H1 (cell line): ENCODE measurements at regions of chr2 and their contacts with region 1.

Region 1: GRCh38 chr2:47119001-47119400 is 36.1 kb downstream of the STPG4 start:
- DNase-seq: no peak
- H3K4me3 ChIP-seq: no peak overlapping the region
- H3K27ac ChIP-seq: no peak overlapping the region
- H3K4me1 ChIP-seq: no peaks in the 10 kb centered on the region
- H3K27me3 ChIP-seq: no peaks in the 10 kb centered on the region
- CTCF ChIP-seq: no peak
- EP300 ChIP-seq: no peak
- POLR2A ChIP-seq: no peak
- RAD21 ChIP-seq: no peak

Region 2: DNA sequence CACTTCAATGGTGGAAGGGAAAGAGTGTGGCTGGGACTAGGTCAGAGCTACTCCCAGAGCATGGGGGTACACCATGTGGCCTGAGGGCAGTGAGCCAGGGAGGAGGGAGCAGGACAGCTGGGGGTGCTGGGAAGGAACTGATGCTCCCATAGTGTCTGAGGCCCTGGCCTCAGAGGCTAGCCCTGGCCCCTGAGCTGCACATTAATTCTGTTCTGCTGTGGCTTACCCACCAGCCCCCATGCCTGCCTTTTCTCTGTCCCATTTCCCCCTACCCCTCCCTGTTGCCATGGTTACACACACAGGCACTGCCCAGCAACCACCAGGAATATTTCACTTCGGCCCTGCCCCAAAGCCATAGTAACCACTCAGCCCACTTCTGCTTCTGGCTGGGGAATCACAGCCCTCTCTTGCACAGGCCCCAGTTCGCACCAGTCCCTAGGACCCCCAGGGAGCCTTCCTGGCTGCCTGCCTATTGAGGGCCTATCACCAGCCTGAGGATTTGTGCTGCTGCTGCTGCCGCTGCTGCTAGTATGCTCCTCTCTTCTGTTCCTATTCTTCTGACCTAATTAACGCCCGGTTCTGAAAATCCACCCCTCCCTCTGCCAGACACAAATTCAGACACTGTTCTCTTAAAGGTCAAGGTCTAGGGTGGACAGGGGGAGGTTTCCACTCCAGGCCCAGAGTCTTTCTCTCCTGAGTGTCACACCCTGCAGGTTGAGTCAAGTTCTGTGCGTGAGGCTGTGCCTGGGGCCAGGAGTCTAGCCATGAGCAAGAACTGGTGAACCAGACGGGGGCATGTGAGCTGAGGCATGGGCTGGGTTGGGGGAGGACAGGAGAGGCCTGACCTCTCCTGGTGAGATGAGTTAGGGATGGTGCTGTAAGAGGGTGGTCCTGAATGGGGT is 116.3 kb before region 1 on chr2:
- CTCF ChIA-PET with region 1: interaction called, 10 read pairs
- POLR2A ChIA-PET with region 1: no interaction called
- DNase-seq: no peak
- H3K4me3 ChIP-seq: no peak overlapping the region
- H3K27ac ChIP-seq: no peak overlapping the region
- H3K4me1 ChIP-seq: peaks cover 0 to 9% (median 0%) of the 10 kb centered on the region in 4 experiments; a peak in 4 of 7 replicates
- H3K27me3 ChIP-seq: no peaks in the 10 kb centered on the region
- CTCF ChIP-seq: no peak
- EP300 ChIP-seq: no peak
- POLR2A ChIP-seq: no peak
- RAD21 ChIP-seq: peak in 1 of 2 experiments; percentile 4; a peak in 1 of 4 replicates

Region 3: GRCh38 chr2:47150175-47150574 is 31.2 kb after region 1 on chr2:
- CTCF ChIA-PET with region 1: no interaction called
- POLR2A ChIA-PET with region 1: no interaction called
- DNase-seq: no peak
- H3K4me3 ChIP-seq: no peak overlapping the region
- H3K27ac ChIP-seq: no peak overlapping the region
- H3K4me1 ChIP-seq: no peaks in the 10 kb centered on the region
- H3K27me3 ChIP-seq: no peaks in the 10 kb centered on the region
- CTCF ChIP-seq: no peak
- EP300 ChIP-seq: no peak
- POLR2A ChIP-seq: no peak
- RAD21 ChIP-seq: no peak